ENCODE measurements at regions of chr2 and their contacts with region 1.

Region 1: GRCh38 chr2:135913727-135914365 is 37.6 kb upstream of the MCM6 start:
- DNase-seq: peak; percentile 86
- H3K4me3 Mint-ChIP-seq: no peak overlapping the region
- H3K27ac Mint-ChIP-seq: no peak overlapping the region
- H3K4me1 Mint-ChIP-seq: peaks cover 18% of the 10 kb centered on the region
- H3K27me3 Mint-ChIP-seq: no peaks in the 10 kb centered on the region

Region 2: DNA sequence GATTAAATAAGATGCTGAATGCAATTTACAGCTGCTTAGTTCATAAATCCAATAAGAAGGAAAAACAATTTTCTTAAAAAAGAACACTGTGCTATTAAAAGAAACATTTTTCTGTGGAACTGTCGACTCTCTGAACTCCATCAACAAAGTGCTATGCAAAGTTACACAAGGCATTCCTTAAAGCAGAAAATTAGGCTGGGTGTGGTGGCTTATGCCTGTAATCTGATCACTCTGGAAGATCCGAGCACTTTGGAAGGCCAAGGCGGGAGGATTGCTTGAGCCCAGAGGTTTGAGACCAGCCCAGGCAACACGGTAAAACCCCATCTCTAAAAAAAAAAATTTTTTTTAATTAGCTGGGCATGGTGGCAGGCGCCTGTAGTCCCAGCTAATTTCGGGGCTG is 50.6 kb before region 1 on chr2:
- intact Hi-C with region 1: loop called (anchors 5 kb)
- DNase-seq: no peak
- H3K4me3 Mint-ChIP-seq: no peak overlapping the region
- H3K27ac Mint-ChIP-seq: no peak overlapping the region
- H3K4me1 Mint-ChIP-seq: peaks cover 27% of the 10 kb centered on the region
- H3K27me3 Mint-ChIP-seq: no peaks in the 10 kb centered on the region

Region 3: DNA sequence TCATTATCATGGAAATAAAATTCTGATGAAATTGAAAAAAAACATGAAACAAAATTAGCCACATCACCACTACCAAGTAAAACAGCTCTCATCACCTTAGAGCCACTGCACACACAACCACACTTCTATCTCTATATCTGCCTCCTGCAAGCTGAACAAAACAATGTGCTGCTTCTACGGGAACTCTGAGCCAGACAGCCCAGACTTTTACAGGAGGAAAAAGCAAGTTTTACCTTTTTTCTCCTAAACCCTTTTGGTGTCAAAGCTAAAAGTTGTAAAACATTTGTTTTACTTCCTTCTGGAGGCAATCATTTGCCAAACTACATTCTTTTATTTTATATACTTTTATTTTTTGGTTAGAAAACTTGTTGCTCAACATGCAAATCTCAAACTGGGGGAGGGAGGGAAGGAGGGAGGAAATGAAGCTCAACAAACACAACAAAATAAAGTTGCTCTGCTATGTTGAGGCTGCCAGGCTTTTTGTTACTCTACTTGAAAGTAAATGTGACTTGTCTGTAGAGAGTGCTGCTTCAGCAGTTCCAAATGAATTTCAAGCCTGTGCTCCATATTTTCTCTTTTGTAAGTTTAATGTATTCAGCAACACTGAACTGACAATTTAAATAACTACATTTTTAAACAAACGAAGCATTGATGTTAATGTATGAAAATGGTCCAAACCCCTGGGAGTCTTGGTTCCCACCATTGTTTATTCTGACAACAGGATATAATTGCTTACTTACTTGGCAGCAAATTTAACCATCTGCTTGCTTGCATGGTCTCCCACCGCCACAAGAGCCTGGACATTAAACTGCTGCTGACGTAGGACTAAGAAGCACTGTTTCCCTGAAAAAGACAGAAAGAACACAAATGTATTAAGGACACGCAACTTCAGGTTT is 47.1 kb after region 1 on chr2:
- intact Hi-C with region 1: no loop called
- DNase-seq: peak; percentile 83
- H3K4me3 Mint-ChIP-seq: peak overlapping the region; percentile 58
- H3K27ac Mint-ChIP-seq: peak overlapping the region; percentile 94
- H3K4me1 Mint-ChIP-seq: peaks cover 56% of the 10 kb centered on the region
- H3K27me3 Mint-ChIP-seq: no peaks in the 10 kb centered on the region

Region 4: GRCh38 chr2:136246086-136246669 is 332.3 kb after region 1 on chr2:
- intact Hi-C with region 1: loop called (anchors 10 kb)
- DNase-seq: peak; percentile 55
- H3K4me3 Mint-ChIP-seq: no peak overlapping the region
- H3K27ac Mint-ChIP-seq: no peak overlapping the region
- H3K4me1 Mint-ChIP-seq: peaks cover 26% of the 10 kb centered on the region
- H3K27me3 Mint-ChIP-seq: peaks cover 2% of the 10 kb centered on the region

Region 5: DNA sequence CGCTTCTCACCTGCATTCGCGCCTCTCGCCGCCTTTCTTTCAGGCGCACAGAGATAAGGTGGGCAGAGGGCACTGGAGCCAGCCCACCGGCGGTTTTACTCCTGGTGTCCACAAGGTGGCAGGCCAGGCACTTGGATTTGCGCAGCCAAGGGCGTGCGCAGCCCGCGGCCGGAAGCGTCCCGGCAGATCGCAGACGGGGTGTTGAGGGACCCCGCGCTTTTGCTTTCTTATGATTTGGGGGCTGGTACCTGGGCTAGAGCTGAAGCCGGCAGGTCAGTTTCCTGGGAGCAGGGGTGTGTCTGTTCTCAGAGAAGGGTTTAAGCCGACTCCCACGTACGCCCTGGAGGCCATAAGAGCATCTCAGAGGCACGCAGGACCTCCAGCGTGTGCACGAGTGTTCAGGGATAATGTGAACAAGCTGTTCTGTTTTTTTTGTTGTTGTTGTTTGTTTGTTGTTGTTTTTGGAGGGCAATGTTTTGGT is 509.7 kb after region 1 on chr2:
- intact Hi-C with region 1: loop called (anchors 2 kb)
- DNase-seq: peak; percentile 94
- H3K4me3 Mint-ChIP-seq: peak overlapping the region; percentile 81
- H3K27ac Mint-ChIP-seq: peak overlapping the region; percentile 7
- H3K4me1 Mint-ChIP-seq: peaks cover 21% of the 10 kb centered on the region
- H3K27me3 Mint-ChIP-seq: peaks cover 53% of the 10 kb centered on the region

Measured in activated CD4-positive, alpha-beta T cell treated with anti-CD3 and anti-CD28 coated beads, Interleukin-2, amount 10 ng/mL, durations not matched to agents 24 days and 14 days (primary cell).